ENCODE measurements at regions of chr7 and their contacts with region 1.

Region 1: GRCh38 chr7:132419542-132419941 is 156.7 kb downstream of the PLXNA4 start:
- DNase-seq: peak; percentile 96
- H3K4me3 ChIP-seq: no peak overlapping the region
- H3K27ac ChIP-seq: peak overlapping the region; percentile 87
- H3K4me1 ChIP-seq: peaks cover 57% of the 10 kb centered on the region
- H3K27me3 ChIP-seq: no peaks in the 10 kb centered on the region
- CTCF ChIP-seq: no peak
- POLR2A ChIP-seq: peak; percentile 81

Region 2: DNA sequence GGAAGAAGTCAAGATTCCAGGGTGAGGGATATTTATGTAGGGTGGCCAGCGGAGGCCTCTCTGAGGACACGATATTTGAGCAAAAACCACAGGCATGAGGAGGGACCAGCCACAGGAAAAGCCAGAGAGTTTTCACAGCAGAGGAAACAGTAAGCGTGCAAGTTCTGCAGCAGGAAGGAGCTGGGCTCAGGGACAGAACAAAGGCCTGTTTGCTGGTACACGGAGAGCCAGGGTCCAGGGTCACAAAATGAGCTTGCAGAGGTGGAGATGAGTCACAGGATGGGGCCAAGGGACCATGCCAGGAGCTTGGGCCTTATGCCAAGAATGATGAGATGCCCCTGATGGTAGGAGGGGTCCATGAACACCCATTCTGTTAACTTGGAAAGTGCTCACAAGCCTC is 126.7 kb before region 1 on chr7:
- CTCF ChIA-PET with region 1: no interaction called
- POLR2A ChIA-PET with region 1: no interaction called
- dilution Hi-C with region 1: no loop called
- intact Hi-C with region 1: loop called (anchors 1 kb)
- DNase-seq: peak; percentile 84
- H3K4me3 ChIP-seq: no peak overlapping the region
- H3K27ac ChIP-seq: peak overlapping the region; percentile 64
- H3K4me1 ChIP-seq: peaks cover 54% of the 10 kb centered on the region
- H3K27me3 ChIP-seq: no peaks in the 10 kb centered on the region
- CTCF ChIP-seq: no peak
- POLR2A ChIP-seq: no peak

Region 3: GRCh38 chr7:132386201-132386681 is 33.3 kb before region 1 on chr7:
- CTCF ChIA-PET with region 1: interaction called, 3 read pairs
- POLR2A ChIA-PET with region 1: no interaction called
- dilution Hi-C with region 1: no loop called
- intact Hi-C with region 1: loop called (anchors 2 kb)
- DNase-seq: peak; percentile 97
- H3K4me3 ChIP-seq: no peak overlapping the region
- H3K27ac ChIP-seq: peak overlapping the region; percentile 10
- H3K4me1 ChIP-seq: peaks cover 21% of the 10 kb centered on the region
- H3K27me3 ChIP-seq: no peaks in the 10 kb centered on the region
- CTCF ChIP-seq: no peak
- POLR2A ChIP-seq: no peak

Region 4: DNA sequence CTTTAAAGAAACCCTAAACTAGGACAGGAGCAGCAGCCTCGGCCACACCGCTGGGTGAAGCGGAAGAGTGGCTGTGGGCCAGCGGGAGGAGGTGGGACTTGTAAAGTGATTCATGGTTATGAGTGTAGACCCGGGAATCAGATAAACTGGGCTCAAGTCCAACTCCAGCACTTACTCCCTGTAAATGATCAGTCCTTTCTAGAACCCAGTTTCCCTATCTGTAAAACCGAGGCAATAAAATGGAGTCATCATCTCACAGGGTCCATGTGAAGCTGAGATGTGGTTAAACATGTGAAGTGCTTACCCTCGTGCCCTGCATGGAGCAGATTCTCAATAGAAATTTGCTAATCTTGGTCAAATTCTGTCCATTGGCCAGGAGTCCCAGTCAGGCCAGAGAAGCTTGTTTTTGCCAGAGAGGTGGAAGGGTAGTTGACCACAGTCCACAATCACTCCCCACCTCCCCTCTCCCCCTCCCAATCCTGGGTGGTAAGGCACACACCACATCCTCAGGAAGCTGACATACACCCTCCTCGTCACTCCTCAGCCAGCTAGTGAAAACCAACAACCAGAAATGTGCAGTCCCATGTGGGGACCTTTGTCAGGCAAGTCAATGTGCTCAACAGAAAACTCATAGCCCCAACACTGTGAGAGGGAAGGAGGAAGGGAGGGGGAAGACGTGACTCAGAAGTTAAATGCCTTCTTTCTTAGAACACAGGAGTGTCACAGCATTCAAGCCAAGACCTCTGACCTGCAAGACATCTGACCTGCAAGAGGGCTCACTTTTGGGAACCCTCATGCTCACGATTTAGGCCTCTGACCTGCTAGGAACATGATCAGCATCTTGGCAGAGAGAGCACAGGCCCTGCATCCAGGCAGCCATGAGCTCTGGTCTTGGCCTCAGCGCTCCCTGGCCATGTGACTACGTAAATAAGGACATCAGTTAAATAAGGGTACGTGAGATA is 11.6 kb after region 1 on chr7:
- CTCF ChIA-PET with region 1: interaction called, 14 read pairs
- POLR2A ChIA-PET with region 1: interaction called, 3 read pairs
- dilution Hi-C with region 1: no loop called
- intact Hi-C with region 1: loop called (anchors 1 kb)
- DNase-seq: peak; percentile 92
- H3K4me3 ChIP-seq: no peak overlapping the region
- H3K27ac ChIP-seq: peak overlapping the region; percentile 87
- H3K4me1 ChIP-seq: peaks cover 44% of the 10 kb centered on the region
- H3K27me3 ChIP-seq: no peaks in the 10 kb centered on the region
- CTCF ChIP-seq: no peak
- POLR2A ChIP-seq: peak; percentile 26

Region 5: DNA sequence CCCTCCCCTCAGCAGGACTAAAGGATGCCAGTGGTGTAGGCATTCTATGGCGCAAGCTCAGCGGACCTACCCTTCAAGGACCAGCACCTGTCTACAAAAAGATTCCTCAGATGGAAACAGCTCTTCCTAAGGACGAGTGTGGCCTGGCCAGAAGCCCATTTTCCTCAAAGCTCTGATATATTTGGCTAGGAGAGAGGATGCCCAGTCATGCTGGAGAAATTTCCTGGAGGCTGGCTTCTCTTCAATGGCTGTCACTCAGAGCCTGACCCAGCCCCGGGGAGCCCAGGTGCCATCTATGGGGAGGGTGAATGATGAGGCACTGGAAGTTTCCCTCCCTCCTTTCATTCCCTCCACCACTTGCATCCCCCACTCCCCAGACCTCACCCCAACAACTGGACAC is 45.2 kb after region 1 on chr7:
- CTCF ChIA-PET with region 1: interaction called, 4 read pairs
- POLR2A ChIA-PET with region 1: no interaction called
- dilution Hi-C with region 1: no loop called
- intact Hi-C with region 1: loop called (anchors 1 kb)
- DNase-seq: peak; percentile 94
- H3K4me3 ChIP-seq: no peak overlapping the region
- H3K27ac ChIP-seq: peak overlapping the region; percentile 76
- H3K4me1 ChIP-seq: peaks cover 47% of the 10 kb centered on the region
- H3K27me3 ChIP-seq: no peaks in the 10 kb centered on the region
- CTCF ChIP-seq: no peak
- POLR2A ChIP-seq: peak; percentile 44

Measured in endothelial cell of umbilical vein (primary cell).